ENCODE measurements at regions of chr1 and their contacts with region 1.

Region 1: GRCh38 chr1:247373721-247374141 is 42.1 kb upstream of the ZNF496 start:
- DNase-seq: peak; percentile 66
- ATAC-seq: peak; percentile 71
- H3K4me3 ChIP-seq: peak overlapping the region in 2 of 5 experiments; percentile 32 to 49
- H3K4me3 Mint-ChIP-seq: peak overlapping the region; percentile 41
- H3K27ac ChIP-seq: no peak overlapping the region
- H3K27ac Mint-ChIP-seq: no peak overlapping the region
- H3K4me1 ChIP-seq: peaks cover 0 to 2% of the 10 kb centered on the region in 2 donors
- H3K4me1 Mint-ChIP-seq: peaks cover 7% of the 10 kb centered on the region
- H3K27me3 ChIP-seq: peaks cover 0 to 9% (median 0%) of the 10 kb centered on the region in 4 experiments
- H3K27me3 Mint-ChIP-seq: peaks cover 20% of the 10 kb centered on the region
- CTCF ChIP-seq: peak; percentile 50

Region 2: DNA sequence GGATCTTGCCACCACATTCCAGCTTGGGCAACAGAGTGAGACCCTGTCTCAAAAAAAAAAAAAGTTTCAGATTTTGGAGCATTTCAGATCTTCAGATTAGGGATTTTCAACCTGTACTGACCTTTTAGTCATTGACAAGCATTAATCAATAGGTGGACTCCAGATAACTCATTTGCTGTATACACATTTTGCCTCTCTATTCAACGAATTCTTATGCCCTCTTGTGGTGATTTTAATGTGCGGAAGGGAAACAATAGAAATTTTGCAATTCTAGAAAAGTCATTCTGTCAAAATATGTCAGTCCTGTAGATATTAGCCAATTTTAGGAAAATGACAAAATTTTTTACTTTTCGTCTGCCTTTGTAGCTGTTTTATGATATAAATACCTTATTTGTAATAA is 202.8 kb after region 1 on chr1:
- CTCF ChIA-PET with region 1: interaction called, 3 read pairs
- POLR2A ChIA-PET with region 1: interaction called, 4 read pairs
- intact Hi-C with region 1: loop called (anchors 5 kb)
- DNase-seq: peak; percentile 18
- ATAC-seq: no peak
- H3K4me3 ChIP-seq: no peak overlapping the region
- H3K4me3 Mint-ChIP-seq: no peak overlapping the region
- H3K27ac ChIP-seq: no peak overlapping the region
- H3K27ac Mint-ChIP-seq: no peak overlapping the region
- H3K4me1 ChIP-seq: no peaks in the 10 kb centered on the region
- H3K4me1 Mint-ChIP-seq: no peaks in the 10 kb centered on the region
- H3K27me3 ChIP-seq: peaks cover 0 to 7% (median 0%) of the 10 kb centered on the region in 4 experiments
- H3K27me3 Mint-ChIP-seq: peaks cover 32% of the 10 kb centered on the region
- CTCF ChIP-seq: peak; percentile 37

Measured in B cell (primary cell).